Caco-2 (cell line): ENCODE measurements at regions of chr5 and their contacts with region 1.

Region 1: GRCh38 chr5:35815089-35815936 is 41.4 kb upstream of the IL7R start:
- DNase-seq: peak; percentile 52 to 56
- H3K4me3 ChIP-seq: no peak overlapping the region
- H3K4me3 Mint-ChIP-seq: no peak overlapping the region
- H3K27ac Mint-ChIP-seq: no peak overlapping the region
- H3K4me1 ChIP-seq: 0 out of 2 replicates have a peak, but pooled peaks cover 14% of the 10 kb centered on the region
- H3K4me1 Mint-ChIP-seq: peaks cover 7% of the 10 kb centered on the region
- H3K27me3 ChIP-seq: no peaks in the 10 kb centered on the region
- H3K27me3 Mint-ChIP-seq: no peaks in the 10 kb centered on the region
- CTCF ChIP-seq: peak; percentile 58 to 70

Region 2: DNA sequence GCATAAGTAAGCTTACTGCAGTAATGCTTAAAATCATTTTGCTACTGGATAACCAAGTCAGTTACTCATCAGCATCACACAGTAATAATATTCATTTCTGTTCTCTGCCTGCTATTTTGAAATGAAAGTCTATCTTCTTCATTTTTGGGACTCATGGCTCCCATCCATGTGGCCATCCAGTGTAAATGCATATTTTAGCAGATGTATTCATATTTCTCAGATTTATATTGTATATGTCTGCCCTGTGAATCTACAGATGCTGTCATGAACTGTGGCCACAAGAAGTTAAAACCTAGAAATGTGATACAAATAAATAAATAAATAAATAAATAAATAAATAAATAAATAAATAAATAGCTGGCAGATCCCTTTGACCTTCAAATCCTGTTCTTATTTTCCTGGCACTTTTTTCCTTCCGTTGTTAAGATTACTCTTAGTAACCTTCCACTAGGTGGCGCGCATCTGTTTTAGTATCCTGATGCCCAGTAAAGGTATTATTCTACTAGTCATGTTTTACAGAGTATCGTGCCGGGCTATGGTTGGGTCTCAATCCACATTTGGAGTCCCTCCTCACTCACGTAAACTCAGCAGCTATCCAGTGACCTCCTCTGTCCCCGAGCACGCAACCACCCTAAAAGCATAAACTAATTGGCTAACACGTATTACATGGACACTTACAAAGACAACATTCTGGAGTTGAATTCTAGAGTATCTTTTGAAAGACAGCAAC is 37.8 kb before region 1 on chr5:
- CTCF ChIA-PET with region 1: no interaction called
- POLR2A ChIA-PET with region 1: no interaction called
- intact Hi-C with region 1: loop called (anchors 1 kb)
- DNase-seq: peak; percentile 67 to 70
- H3K4me3 ChIP-seq: no peak overlapping the region
- H3K4me3 Mint-ChIP-seq: no peak overlapping the region
- H3K27ac Mint-ChIP-seq: no peak overlapping the region
- H3K4me1 ChIP-seq: no peaks in the 10 kb centered on the region
- H3K4me1 Mint-ChIP-seq: no peaks in the 10 kb centered on the region
- H3K27me3 ChIP-seq: no peaks in the 10 kb centered on the region; the same call in none of the 2 replicates
- H3K27me3 Mint-ChIP-seq: peaks cover 6% of the 10 kb centered on the region
- CTCF ChIP-seq: peak; percentile 56 to 69

Region 3: DNA sequence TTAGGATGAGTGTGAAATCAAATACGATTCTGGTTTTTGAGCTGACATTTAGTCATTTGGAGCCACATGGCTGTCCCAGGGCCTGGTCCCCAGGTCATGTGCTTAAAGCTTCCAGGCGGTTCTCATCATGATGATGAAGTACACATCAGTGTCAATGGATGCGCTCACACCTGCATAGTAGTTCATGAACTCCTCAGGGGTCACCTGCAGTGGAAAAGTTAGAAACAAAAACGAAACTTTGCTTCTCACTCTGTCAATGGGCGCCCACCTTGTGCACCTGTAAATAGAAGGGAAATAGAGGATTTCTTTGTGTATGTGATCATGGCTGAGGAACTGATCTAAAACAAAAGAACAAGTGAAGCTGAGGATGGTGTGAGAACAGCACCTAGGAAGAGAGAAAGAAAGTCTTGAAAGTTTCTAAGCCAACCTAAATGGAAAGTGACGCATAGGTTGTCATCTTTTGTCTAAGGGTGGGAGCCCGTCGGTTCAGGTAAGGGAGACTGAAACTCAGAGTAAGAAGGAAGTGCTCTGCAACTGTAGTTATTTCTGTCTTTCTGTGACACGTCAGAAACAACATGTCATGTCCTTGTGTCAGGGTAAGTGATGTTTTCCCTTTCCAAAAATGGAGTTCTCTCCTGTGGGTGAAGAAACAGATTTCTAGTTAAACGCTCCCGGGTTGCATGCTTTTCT is 89.3 kb after region 1 on chr5:
- CTCF ChIA-PET with region 1: no interaction called
- POLR2A ChIA-PET with region 1: no interaction called
- intact Hi-C with region 1: no loop called
- DNase-seq: no peak
- H3K4me3 ChIP-seq: no peak overlapping the region
- H3K4me3 Mint-ChIP-seq: no peak overlapping the region
- H3K27ac Mint-ChIP-seq: no peak overlapping the region
- H3K4me1 ChIP-seq: no peaks in the 10 kb centered on the region
- H3K4me1 Mint-ChIP-seq: peaks cover 6% of the 10 kb centered on the region
- H3K27me3 ChIP-seq: no peaks in the 10 kb centered on the region
- H3K27me3 Mint-ChIP-seq: peaks cover 9% of the 10 kb centered on the region
- CTCF ChIP-seq: no peak